Endothelial cell of umbilical vein (primary cell): ENCODE measurements at regions of chrX and their contacts with region 1.

Region 1: DNA sequence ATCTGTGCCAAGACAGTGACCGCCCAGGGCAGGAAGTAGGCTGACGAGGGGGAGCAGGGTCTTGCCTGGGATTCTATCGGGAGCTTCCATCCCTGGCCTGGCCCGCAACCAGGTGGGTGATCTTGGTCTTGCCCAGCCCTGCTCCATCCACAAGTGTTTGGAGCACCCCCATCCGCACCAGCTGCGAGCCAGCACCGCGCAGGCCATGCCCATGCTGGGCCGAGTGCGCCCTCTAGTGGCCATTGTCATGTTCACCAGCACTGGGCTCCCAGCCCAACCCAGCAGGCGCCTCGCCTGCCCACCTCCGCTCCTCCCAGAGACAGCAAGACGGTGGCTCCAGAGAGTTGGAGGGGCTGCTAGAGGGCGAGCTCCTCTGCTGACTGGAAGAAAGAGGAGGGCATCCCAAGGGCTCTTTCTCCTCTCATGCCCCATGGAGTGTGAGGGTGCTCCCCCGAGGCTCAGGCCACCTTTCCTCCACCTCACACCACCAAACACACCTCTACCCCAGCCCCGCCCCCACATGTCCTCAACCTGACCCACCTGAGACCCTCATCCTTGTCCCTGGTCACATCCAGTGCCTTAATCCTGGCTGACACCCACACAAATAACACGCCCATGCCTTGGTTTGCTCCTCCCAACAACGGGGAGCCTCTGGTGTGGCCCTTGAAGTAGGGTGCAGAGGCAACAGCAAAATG is 9.8 kb upstream of the ATP2B3 start:
- DNase-seq: peak; percentile 68
- H3K4me3 ChIP-seq: no peak overlapping the region
- H3K27ac ChIP-seq: no peak overlapping the region
- H3K4me1 ChIP-seq: no peaks in the 10 kb centered on the region
- H3K27me3 ChIP-seq: no peaks in the 10 kb centered on the region
- CTCF ChIP-seq: peak; percentile 65 to 80
- POLR2A ChIP-seq: no peak

Region 2: DNA sequence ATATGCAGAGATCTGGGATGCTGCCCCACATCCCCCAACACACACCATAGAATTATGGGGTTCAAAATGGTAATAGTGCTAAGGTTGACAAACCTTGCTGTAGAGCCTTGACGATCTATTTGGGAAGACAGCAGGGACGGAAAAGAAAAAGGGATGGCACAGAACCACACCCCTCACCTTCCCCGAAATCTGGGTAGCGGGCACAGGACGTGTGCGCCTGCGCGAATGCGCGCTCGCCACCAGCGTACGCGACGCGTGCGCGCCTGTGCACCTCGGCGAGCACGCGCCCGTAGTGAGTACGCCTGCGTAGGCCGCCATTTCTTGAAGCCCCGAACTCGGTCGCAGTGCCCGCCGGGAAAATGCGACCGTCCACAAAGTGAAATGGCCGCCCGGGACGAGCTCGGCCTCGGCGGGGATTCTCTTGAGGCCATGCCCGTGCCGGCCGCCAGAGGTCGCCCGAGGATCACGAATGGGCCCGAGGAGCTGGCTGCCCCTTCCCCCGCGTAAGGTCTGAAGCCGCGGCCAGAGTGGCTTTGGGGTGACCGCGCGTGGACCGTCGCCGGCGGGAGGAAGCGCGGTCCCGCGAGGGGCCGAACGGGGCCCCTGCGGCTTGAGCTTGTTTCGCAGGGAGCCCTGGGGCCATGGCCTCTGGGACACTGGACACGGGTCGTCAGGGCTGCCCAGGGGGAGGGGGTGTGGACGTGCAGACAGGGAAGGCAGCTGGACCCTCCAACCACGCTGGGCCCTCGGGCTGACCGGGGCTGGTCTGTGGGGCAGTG is 566.1 kb before region 1 on chrX:
- CTCF ChIA-PET with region 1: no interaction called
- POLR2A ChIA-PET with region 1: no interaction called
- dilution Hi-C with region 1: no loop called
- intact Hi-C with region 1: loop called (anchors 5 kb)
- DNase-seq: peak; percentile 91
- H3K4me3 ChIP-seq: peak overlapping the region; percentile 28 to 74 (median 62)
- H3K27ac ChIP-seq: peak overlapping the region; percentile 46
- H3K4me1 ChIP-seq: peaks cover 13% of the 10 kb centered on the region
- H3K27me3 ChIP-seq: no peaks in the 10 kb centered on the region
- CTCF ChIP-seq: peak; percentile 64 to 81
- POLR2A ChIP-seq: peak; percentile 75

Region 3: GRCh38 chrX:153032397-153033118 is 475.1 kb before region 1 on chrX:
- CTCF ChIA-PET with region 1: interaction called, 3 read pairs
- POLR2A ChIA-PET with region 1: no interaction called
- dilution Hi-C with region 1: no loop called
- intact Hi-C with region 1: loop called (anchors 2 kb)
- DNase-seq: peak; percentile 56
- H3K4me3 ChIP-seq: peak overlapping the region in 2 of 3 experiments; percentile 20 to 27
- H3K27ac ChIP-seq: no peak overlapping the region
- H3K4me1 ChIP-seq: no peaks in the 10 kb centered on the region
- H3K27me3 ChIP-seq: no peaks in the 10 kb centered on the region
- CTCF ChIP-seq: peak; percentile 69 to 83
- POLR2A ChIP-seq: no peak

Region 4: GRCh38 chrX:153470435-153471363 is 36.9 kb before region 1 on chrX and contains the start of gene HAUS7:
- CTCF ChIA-PET with region 1: interaction called, 146 read pairs
- POLR2A ChIA-PET with region 1: interaction called, 4 read pairs
- dilution Hi-C with region 1: no loop called
- intact Hi-C with region 1: loop called (anchors 1 kb)
- DNase-seq: peak; percentile 92
- H3K4me3 ChIP-seq: peak within 1 kb of the TSS; percentile 61 to 73 (median 64)
- H3K27ac ChIP-seq: peak within 1 kb of the TSS; percentile 53
- H3K4me1 ChIP-seq: peaks cover 15% of the 10 kb centered on the region
- H3K27me3 ChIP-seq: no peaks in the 10 kb centered on the region
- CTCF ChIP-seq: peak; percentile 51 to 74
- POLR2A ChIP-seq: no peak
- total RNA-seq, gene HAUS7: 30.6 and 46.4 TPM in 2 replicates

Region 5: GRCh38 chrX:153488231-153488914 is 19.3 kb before region 1 on chrX:
- CTCF ChIA-PET with region 1: no interaction called
- POLR2A ChIA-PET with region 1: interaction called, 12 read pairs
- dilution Hi-C with region 1: no loop called
- intact Hi-C with region 1: no loop called
- DNase-seq: peak; percentile 91
- H3K4me3 ChIP-seq: no peak overlapping the region
- H3K27ac ChIP-seq: peak overlapping the region; percentile 80
- H3K4me1 ChIP-seq: peaks cover 47% of the 10 kb centered on the region
- H3K27me3 ChIP-seq: no peaks in the 10 kb centered on the region
- CTCF ChIP-seq: no peak
- POLR2A ChIP-seq: no peak

Region 6: GRCh38 chrX:154000051-154000450 is 492.4 kb after region 1 on chrX:
- CTCF ChIA-PET with region 1: no interaction called
- POLR2A ChIA-PET with region 1: no interaction called
- dilution Hi-C with region 1: no loop called
- intact Hi-C with region 1: no loop called
- DNase-seq: no peak
- H3K4me3 ChIP-seq: no peak overlapping the region
- H3K27ac ChIP-seq: no peak overlapping the region
- H3K4me1 ChIP-seq: no peaks in the 10 kb centered on the region
- H3K27me3 ChIP-seq: no peaks in the 10 kb centered on the region
- CTCF ChIP-seq: no peak
- POLR2A ChIP-seq: no peak